ENCODE measurements at regions of chr10 and their contacts with region 1.

Region 1: DNA sequence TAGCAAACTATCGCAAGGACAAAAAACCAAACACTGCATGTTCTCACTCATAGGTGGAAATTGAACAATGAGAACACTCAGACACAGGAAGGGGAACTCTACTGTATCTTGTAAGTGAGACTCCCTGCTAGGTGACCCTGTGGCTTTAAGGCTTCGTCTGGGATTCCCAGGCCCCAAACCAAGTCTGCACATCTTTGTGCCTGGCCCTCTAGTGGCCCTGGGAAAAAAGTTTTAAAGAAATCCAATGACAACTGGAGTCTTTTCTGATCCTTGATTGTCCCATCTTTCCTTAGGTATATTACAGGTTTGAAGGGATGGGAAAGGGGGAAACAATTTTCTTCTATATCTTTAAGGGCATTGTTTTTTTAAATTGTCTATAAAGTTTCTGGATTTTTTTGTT is 10.6 kb upstream of the LIPM start:
- DNase-seq: no peak
- ATAC-seq: peak in 1 of 2 donors; percentile 27

Region 2: DNA sequence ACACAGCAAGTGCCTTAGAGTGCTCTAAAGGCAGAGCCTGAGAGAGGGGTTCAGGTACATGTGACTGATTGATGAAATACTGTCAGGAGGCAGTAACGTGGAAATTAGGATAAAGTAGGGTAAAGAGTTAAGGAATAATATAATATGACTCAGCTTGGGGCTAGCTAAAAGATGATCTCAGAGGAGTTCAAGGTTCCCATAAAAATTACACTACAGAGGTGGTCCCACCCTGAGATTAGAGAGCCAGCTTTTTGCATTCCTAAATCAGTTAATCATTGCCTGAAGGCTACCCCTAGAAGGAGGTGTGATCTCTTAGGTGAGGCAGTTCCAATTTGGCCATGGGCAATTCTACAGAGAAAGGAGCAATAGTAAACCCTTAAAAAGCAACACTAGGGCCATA is 199.5 kb before region 1 on chr10:
- intact Hi-C with region 1: no loop called
- DNase-seq: no peak
- ATAC-seq: no peak

Region 3: GRCh38 chr10:88687853-88688467 is 104.0 kb before region 1 on chr10:
- intact Hi-C with region 1: loop called in 1 of 2 experiments (anchors 10 kb)
- DNase-seq: no peak
- ATAC-seq: no peak

Region 4: DNA sequence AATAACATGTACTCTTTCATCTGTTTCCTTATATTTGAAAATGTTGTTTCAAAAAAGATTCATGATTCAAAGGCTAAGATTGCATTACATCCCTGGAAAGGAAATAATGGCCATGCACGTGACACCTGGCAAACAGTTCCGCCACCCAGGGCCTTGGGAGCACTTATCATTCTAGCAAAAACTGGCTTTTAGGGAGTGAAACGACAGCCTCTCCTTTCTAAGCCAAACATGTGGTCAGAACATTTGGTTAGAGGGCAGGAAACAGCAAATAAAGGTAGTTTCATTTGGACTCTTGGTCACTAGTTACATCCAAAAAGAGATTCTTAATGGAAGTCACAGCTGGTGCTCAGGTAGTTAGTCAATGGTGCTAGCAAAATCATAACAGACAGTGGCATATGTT is 282.2 kb after region 1 on chr10:
- intact Hi-C with region 1: no loop called
- DNase-seq: peak; percentile 61
- ATAC-seq: peak; percentile 65 to 73

Measured in left cardiac atrium (tissue), 4 donors.